Activated CD4-positive, alpha-beta memory T cell treated with anti-CD3 and anti-CD28 coated beads for 36 hours (primary cell): ENCODE measurements at regions of chr20 and their contacts with region 1.

Region 1: GRCh38 chr20:57391074-57391554 is at the start of gene RBM38:
- DNase-seq: peak; percentile 85
- H3K4me3 Mint-ChIP-seq: peak within 1 kb of the TSS; percentile 95
- H3K27ac Mint-ChIP-seq: peak within 1 kb of the TSS; percentile 97
- H3K4me1 Mint-ChIP-seq: peaks cover 40% of the 10 kb centered on the region
- H3K27me3 Mint-ChIP-seq: no peaks in the 10 kb centered on the region
- total RNA-seq, gene RBM38: 73.4 to 77.3 TPM

Region 2: DNA sequence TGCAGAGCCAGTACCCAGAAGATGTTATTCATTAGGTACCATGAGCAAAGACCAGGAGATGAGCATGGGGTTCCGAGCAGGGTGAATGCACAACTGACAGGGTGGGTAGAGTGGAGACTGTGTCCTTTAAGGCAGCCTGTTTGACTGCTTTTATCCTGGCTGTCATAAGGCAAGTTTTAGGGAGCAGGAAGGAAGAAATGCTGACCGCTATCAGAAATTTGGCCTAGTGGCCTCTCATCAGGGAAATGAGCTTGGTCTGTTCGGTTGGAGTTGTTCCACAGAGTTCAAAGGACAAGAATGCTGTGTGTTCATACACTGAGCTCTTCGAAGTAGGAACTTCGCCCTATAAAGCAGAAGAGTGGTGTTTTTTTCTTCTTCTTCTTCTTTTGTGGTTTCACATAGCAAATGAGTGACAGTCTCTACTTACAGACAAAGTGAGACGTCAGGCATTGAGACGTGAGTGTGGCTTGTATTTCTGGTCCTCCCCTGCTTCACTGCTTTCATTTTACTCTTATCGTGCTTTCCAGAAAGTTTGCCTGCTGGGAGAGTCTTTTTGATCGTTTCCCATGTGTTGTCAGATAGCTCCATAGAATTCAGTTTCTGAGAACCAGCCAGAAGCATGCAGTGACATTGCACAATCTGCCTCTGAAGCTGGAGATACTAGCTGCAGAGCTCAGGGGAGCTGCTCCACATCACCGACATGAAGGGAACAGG is 979.2 kb before region 1 on chr20 and contains the start of gene CASS4:
- CTCF ChIA-PET with region 1: interaction called, 3 read pairs
- POLR2A ChIA-PET with region 1: no interaction called
- intact Hi-C with region 1: loop called (anchors 10 kb)
- DNase-seq: peak; percentile 63
- H3K4me3 Mint-ChIP-seq: peak within 1 kb of the TSS; percentile 83
- H3K27ac Mint-ChIP-seq: peak within 1 kb of the TSS; percentile 91
- H3K4me1 Mint-ChIP-seq: peaks cover 59% of the 10 kb centered on the region
- H3K27me3 Mint-ChIP-seq: no peaks in the 10 kb centered on the region
- total RNA-seq, gene CASS4: 7.8 to 8.6 TPM

Region 3: GRCh38 chr20:57369596-57370325 is 21.4 kb before region 1 on chr20:
- CTCF ChIA-PET with region 1: no interaction called
- POLR2A ChIA-PET with region 1: no interaction called
- intact Hi-C with region 1: no loop called
- DNase-seq: no peak
- H3K4me3 Mint-ChIP-seq: no peak overlapping the region
- H3K27ac Mint-ChIP-seq: no peak overlapping the region
- H3K4me1 Mint-ChIP-seq: peaks cover 12% of the 10 kb centered on the region
- H3K27me3 Mint-ChIP-seq: no peaks in the 10 kb centered on the region

Region 4: GRCh38 chr20:57432874-57433491 is 41.9 kb after region 1 on chr20:
- CTCF ChIA-PET with region 1: interaction called, 4 read pairs
- POLR2A ChIA-PET with region 1: interaction called, 6 read pairs
- intact Hi-C with region 1: loop called (anchors 1 kb)
- DNase-seq: peak; percentile 84
- H3K4me3 Mint-ChIP-seq: peak overlapping the region; percentile 48
- H3K27ac Mint-ChIP-seq: peak overlapping the region; percentile 83
- H3K4me1 Mint-ChIP-seq: peaks cover 55% of the 10 kb centered on the region
- H3K27me3 Mint-ChIP-seq: no peaks in the 10 kb centered on the region

Region 5: DNA sequence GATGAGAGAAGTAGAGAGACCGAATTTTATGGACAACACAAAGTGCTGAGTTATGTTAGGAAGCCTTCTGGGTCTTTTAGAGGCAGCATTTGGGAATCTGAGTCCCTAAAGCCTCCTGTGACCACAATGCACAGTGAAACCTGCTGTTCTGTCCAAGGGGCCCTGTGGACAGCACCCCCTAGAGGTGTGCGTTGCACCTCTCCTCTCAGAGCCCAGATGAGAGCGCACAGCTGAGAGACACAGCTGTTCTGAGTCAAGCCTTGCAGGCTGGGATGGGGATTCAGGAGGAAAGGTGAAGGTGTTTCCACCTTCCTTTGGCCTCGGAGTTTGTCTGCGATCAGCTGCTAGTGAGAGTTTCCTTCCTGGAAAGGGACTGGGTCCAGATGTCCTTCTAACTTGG is 182.8 kb after region 1 on chr20:
- CTCF ChIA-PET with region 1: no interaction called
- POLR2A ChIA-PET with region 1: no interaction called
- intact Hi-C with region 1: no loop called
- DNase-seq: peak; percentile 20
- H3K4me3 Mint-ChIP-seq: no peak overlapping the region
- H3K27ac Mint-ChIP-seq: no peak overlapping the region
- H3K4me1 Mint-ChIP-seq: no peaks in the 10 kb centered on the region
- H3K27me3 Mint-ChIP-seq: peaks cover 25% of the 10 kb centered on the region

Region 6: GRCh38 chr20:57596998-57597939 is 206.2 kb after region 1 on chr20:
- CTCF ChIA-PET with region 1: interaction called, 4 read pairs
- POLR2A ChIA-PET with region 1: no interaction called
- intact Hi-C with region 1: loop called (anchors 10 kb)
- DNase-seq: peak; percentile 75
- H3K4me3 Mint-ChIP-seq: no peak overlapping the region
- H3K27ac Mint-ChIP-seq: no peak overlapping the region
- H3K4me1 Mint-ChIP-seq: peaks cover 2% of the 10 kb centered on the region
- H3K27me3 Mint-ChIP-seq: peaks cover 5% of the 10 kb centered on the region

Region 7: GRCh38 chr20:58236612-58237330 is 845.7 kb after region 1 on chr20:
- CTCF ChIA-PET with region 1: no interaction called
- POLR2A ChIA-PET with region 1: no interaction called
- intact Hi-C with region 1: loop called (anchors 5 kb)
- DNase-seq: peak; percentile 92
- H3K4me3 Mint-ChIP-seq: peak overlapping the region; percentile 81
- H3K27ac Mint-ChIP-seq: peak overlapping the region; percentile 78
- H3K4me1 Mint-ChIP-seq: peaks cover 23% of the 10 kb centered on the region
- H3K27me3 Mint-ChIP-seq: peaks cover 2% of the 10 kb centered on the region

Region 8: DNA sequence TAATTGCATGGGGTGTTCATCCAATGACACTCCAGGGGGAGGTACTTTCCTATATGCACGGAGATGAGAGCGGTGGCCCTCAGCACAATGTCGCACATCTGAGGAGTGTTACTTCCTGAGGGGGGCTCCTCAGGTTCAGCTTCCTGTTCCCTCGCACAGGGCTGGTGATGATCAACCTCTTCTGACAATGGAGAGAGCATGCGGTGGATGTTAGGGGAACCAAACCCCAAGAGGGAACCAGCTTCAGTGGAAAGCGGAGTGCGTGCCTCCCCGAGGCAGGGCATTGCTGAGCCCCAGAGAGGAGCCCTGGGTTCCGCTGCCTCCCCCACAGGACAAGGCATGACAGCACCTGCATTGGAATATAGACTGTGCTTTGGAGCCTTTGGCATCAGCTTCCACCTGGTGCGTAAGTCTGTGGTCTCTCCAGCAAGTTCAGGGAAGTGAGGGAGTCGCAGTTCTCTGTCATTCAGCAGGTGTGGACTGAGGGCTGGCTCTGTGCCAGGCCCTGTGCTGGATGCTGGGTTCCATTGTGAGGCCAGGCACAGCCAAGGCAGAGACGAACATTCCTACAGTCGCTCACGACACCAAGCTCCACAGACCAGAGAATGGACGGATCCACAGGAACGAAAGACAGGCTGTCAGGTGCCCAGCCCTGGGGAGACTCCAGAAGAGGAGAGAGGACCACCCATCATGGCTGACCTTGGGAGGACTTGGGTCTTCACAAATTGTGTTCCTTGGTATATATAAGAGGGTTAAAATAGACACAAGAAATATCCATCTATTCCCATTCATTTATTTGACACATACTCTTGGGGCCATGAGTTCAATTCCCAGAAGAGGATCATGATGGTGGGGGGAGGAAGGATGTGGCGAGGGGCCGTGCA is 1768.6 kb after region 1 on chr20:
- CTCF ChIA-PET with region 1: no interaction called
- POLR2A ChIA-PET with region 1: interaction called, 3 read pairs
- intact Hi-C with region 1: loop called (anchors 10 kb)
- DNase-seq: peak; percentile 80
- H3K4me3 Mint-ChIP-seq: peak overlapping the region; percentile 83
- H3K27ac Mint-ChIP-seq: peak overlapping the region; percentile 96
- H3K4me1 Mint-ChIP-seq: peaks cover 87% of the 10 kb centered on the region
- H3K27me3 Mint-ChIP-seq: no peaks in the 10 kb centered on the region